Heart left ventricle (tissue), 16 donors: ENCODE measurements at regions of chr2 and their contacts with region 1.

Region 1: DNA sequence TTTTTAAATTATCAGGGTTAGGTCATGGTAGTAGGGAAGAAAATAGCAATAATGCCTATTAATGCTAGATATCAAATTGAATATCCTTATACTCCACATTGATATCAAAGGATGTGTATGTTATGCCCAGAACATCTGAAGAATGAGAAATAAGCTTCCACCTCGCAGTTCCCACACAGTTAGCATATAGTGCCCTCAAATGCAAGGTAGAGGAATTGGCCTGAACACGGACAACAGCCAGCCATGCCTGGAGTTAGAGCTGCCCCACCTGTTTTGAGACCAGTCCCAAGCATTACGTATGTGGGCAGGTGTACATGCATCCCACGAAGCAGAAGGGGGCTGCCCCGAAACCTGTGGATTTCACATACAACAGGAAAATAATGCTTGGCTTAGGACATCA is 79.6 kb downstream of the SUMO1 start:
- DNase-seq: no peak
- ATAC-seq: peak in 3 of 4 donors; percentile 48 to 61 (median 52)
- H3K4me3 ChIP-seq: no peak overlapping the region
- H3K27ac ChIP-seq: no peak overlapping the region
- H3K4me1 ChIP-seq: peaks cover 0 to 12% (median 5%) of the 10 kb centered on the region in 12 donors
- H3K27me3 ChIP-seq: no peaks in the 10 kb centered on the region
- CTCF ChIP-seq: peak in 7 of 12 donors; percentile 21 to 43 (median 32)
- POLR2A ChIP-seq: no peak

Region 2: GRCh38 chr2:202064171-202064880 is 94.5 kb before region 1 on chr2:
- intact Hi-C with region 1: loop called in 1 of 10 experiments (anchors 10 kb)
- DNase-seq: peak in 3 of 5 donors; percentile 20 to 52 (median 34)
- ATAC-seq: peak; percentile 32 to 92 (median 80)
- H3K4me3 ChIP-seq: no peak overlapping the region
- H3K27ac ChIP-seq: peak overlapping the region in 3 of 12 donors; percentile 5 to 40 (median 28)
- H3K4me1 ChIP-seq: peaks cover 0 to 12% (median 5%) of the 10 kb centered on the region in 12 donors
- H3K27me3 ChIP-seq: no peaks in the 10 kb centered on the region
- CTCF ChIP-seq: no peak
- POLR2A ChIP-seq: no peak